ENCODE measurements at regions of chr19 and their contacts with region 1.

Region 1: DNA sequence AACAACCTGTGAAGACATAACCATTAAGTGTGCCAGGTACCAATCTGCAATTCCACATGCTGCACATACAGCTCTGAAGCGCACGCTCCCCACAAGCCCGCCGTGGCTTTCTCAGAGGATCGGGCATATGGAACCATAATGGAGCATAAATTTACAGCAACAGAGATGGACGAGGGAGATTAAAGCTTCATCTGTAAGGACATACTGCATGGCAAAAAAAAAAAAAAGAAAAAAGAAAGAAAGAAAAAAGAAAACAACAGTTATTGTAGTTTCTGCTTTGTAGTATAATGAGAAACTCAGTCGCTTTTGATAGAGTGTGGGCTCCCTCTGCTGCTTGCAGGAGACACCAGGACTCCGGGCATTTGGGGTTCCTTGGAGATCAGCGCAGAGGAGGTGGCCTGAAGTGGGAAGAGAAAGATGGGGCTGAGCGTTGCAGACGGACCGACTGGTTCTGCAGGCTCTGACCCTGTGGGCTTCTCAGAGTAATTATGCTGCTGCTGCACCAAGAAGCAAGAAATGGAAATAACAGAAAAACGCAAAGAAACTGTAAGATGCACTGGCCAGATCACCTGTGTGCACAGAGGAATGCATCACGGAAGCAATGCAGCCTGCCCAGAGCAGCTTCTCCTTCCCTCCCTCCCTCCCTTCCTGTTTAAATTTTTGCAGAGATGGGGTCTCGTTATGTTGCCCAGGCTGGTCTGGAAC is 10.8 kb upstream of the PDCD5 start:
- DNase-seq: peak; percentile 37
- H3K4me3 ChIP-seq: no peak overlapping the region
- H3K27ac ChIP-seq: no peak overlapping the region
- H3K4me1 ChIP-seq: no peaks in the 10 kb centered on the region
- H3K27me3 ChIP-seq: no peaks in the 10 kb centered on the region
- CTCF ChIP-seq: peak; percentile 44 to 63
- POLR2A ChIP-seq: no peak

Region 2: GRCh38 chr19:30669329-30670010 is 1900.8 kb before region 1 on chr19:
- CTCF ChIA-PET with region 1: interaction called, 21 read pairs
- POLR2A ChIA-PET with region 1: no interaction called
- dilution Hi-C with region 1: no loop called
- intact Hi-C with region 1: loop called (anchors 5 kb)
- DNase-seq: peak; percentile 29
- H3K4me3 ChIP-seq: no peak overlapping the region
- H3K27ac ChIP-seq: no peak overlapping the region
- H3K4me1 ChIP-seq: no peaks in the 10 kb centered on the region
- H3K27me3 ChIP-seq: no peaks in the 10 kb centered on the region
- CTCF ChIP-seq: peak; percentile 68 to 85
- POLR2A ChIP-seq: no peak

Region 3: GRCh38 chr19:31349160-31349881 is 1220.9 kb before region 1 on chr19 and contains the start of gene TSHZ3:
- CTCF ChIA-PET with region 1: no interaction called
- POLR2A ChIA-PET with region 1: no interaction called
- dilution Hi-C with region 1: no loop called
- intact Hi-C with region 1: loop called (anchors 10 kb)
- DNase-seq: peak; percentile 22
- H3K4me3 ChIP-seq: peak within 1 kb of the TSS; percentile 71 to 79 (median 73)
- H3K27ac ChIP-seq: no peak within 1 kb of the TSS
- H3K4me1 ChIP-seq: peaks cover 10% of the 10 kb centered on the region
- H3K27me3 ChIP-seq: peaks cover 30 to 42% of the 10 kb centered on the region in 2 experiments
- CTCF ChIP-seq: no peak
- POLR2A ChIP-seq: no peak
- total RNA-seq, gene TSHZ3: 6.0 and 6.2 TPM in 2 replicates

Region 4: DNA sequence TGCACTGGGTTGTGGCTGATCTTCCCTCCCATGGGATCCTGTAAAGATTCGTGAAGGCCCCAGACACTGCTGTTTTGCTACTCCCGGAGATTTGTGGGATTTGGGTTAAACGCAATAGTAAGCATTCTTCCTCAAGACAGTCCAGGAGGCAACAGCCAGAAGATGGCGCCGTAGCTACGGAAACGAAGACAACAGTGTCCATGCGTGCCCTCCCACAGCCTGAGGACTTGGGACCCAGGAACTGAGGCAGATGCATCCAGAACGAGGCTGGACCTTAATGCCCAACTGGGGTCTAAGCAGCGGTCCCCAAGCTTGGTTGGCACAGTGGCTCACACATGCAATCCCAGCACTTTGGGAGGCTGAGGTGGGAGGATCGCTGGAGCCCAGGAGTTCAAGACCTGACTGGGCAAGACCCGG is 282.4 kb before region 1 on chr19:
- CTCF ChIA-PET with region 1: interaction called, 39 read pairs
- POLR2A ChIA-PET with region 1: no interaction called
- dilution Hi-C with region 1: no loop called
- intact Hi-C with region 1: loop called (anchors 1 kb)
- DNase-seq: peak; percentile 43
- H3K4me3 ChIP-seq: no peak overlapping the region
- H3K27ac ChIP-seq: no peak overlapping the region
- H3K4me1 ChIP-seq: no peaks in the 10 kb centered on the region
- H3K27me3 ChIP-seq: peaks cover 0 to 2% of the 10 kb centered on the region in 2 experiments
- CTCF ChIP-seq: peak; percentile 18 to 52
- POLR2A ChIP-seq: no peak

Region 5: GRCh38 chr19:32339988-32340874 is 230.0 kb before region 1 on chr19:
- CTCF ChIA-PET with region 1: interaction called, 29 read pairs
- POLR2A ChIA-PET with region 1: no interaction called
- dilution Hi-C with region 1: no loop called
- intact Hi-C with region 1: loop called (anchors 1 kb)
- DNase-seq: peak; percentile 61
- H3K4me3 ChIP-seq: no peak overlapping the region
- H3K27ac ChIP-seq: no peak overlapping the region
- H3K4me1 ChIP-seq: no peaks in the 10 kb centered on the region
- H3K27me3 ChIP-seq: peaks cover 0 to 2% of the 10 kb centered on the region in 2 experiments
- CTCF ChIP-seq: peak; percentile 66 to 70
- POLR2A ChIP-seq: no peak

Measured in endothelial cell of umbilical vein (primary cell).